ENCODE measurements at regions of chr11 and their contacts with region 1.

Region 1: DNA sequence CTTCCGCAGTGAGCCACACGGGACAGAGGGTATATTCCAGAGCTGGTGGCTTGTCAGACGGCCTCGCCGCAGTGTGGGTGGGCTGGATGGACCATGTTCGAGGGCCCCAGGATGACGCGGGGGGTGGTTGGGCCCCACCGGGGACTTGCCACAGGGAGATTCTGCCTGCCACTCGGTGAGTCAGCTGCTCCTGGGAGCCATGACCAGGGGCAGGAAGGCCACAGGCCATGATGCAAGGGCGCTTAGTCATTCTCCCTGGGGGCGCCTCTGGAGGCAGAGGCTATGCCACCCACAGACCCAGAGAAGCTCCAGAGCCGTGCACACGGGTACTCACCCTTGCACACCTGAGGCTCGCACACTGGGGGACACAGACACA is 8.1 kb downstream of the ALX4 start:
- DNase-seq: no peak
- H3K4me3 Mint-ChIP-seq: no peak overlapping the region
- H3K27ac Mint-ChIP-seq: no peak overlapping the region
- H3K4me1 Mint-ChIP-seq: peaks cover 20% of the 10 kb centered on the region
- H3K27me3 Mint-ChIP-seq: peaks cover 64% of the 10 kb centered on the region

Region 2: GRCh38 chr11:44315947-44316658 is 14.3 kb after region 1 on chr11:
- intact Hi-C with region 1: no loop called
- DNase-seq: no peak
- H3K4me3 Mint-ChIP-seq: no peak overlapping the region
- H3K27ac Mint-ChIP-seq: no peak overlapping the region
- H3K4me1 Mint-ChIP-seq: peaks cover 3% of the 10 kb centered on the region
- H3K27me3 Mint-ChIP-seq: peaks cover 95% of the 10 kb centered on the region

Region 3: DNA sequence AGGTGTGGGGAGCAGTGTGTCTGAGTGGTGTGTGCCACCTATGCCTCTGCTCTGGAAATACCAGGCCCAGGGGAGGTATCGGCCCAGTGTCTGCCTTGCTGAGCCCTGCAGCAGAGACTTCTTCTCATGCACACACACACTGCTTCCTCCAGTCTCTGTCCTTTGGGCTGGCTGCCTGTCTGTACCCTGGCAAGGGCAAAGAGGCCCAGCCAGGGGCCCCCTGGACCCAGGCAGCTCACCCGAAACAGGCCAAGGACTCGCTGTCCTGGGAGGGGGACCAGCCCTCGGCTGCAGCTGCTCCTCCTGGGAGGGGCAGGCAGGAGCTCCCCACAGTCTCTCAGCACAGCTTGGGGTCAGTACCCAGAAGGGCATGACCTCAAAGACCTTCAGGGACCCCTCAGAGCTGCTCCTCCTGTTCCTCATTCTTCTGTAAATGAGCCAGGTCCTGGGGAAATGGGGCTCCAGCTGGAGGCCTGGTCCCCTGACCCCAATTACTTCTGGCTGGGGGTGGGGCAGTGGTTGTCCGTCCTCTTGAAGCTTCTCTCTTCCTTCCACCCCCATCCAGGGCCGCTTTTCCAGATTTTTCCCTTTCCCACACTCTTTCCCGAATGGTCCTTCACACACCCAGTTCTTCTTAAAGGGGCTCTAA is 32.6 kb after region 1 on chr11:
- intact Hi-C with region 1: loop called (anchors 5 kb)
- DNase-seq: no peak
- H3K4me3 Mint-ChIP-seq: no peak overlapping the region
- H3K27ac Mint-ChIP-seq: no peak overlapping the region
- H3K4me1 Mint-ChIP-seq: no peaks in the 10 kb centered on the region
- H3K27me3 Mint-ChIP-seq: peaks cover 57% of the 10 kb centered on the region